Left colon (tissue), 2 donors: ENCODE measurements at regions of chr7 and their contacts with region 1.

Region 1: GRCh38 chr7:151459726-151460473 is 20.0 kb upstream of the CRYGN start:
- DNase-seq: peak; percentile 72 to 91
- ATAC-seq: peak; percentile 92

Region 2: GRCh38 chr7:150962553-150963399 is 497.1 kb before region 1 on chr7:
- intact Hi-C with region 1: no loop called
- DNase-seq: peak in 1 of 2 donors; percentile 65
- ATAC-seq: peak; percentile 89

Region 3: GRCh38 chr7:151519765-151520418 is 60.0 kb after region 1 on chr7 and contains the start of gene RHEB:
- intact Hi-C with region 1: loop called in 1 of 2 experiments (anchors 10 kb)
- DNase-seq: peak; percentile 99
- ATAC-seq: peak; percentile 86
- total RNA-seq, gene RHEB: 53.4 to 69.7 TPM

Region 4: DNA sequence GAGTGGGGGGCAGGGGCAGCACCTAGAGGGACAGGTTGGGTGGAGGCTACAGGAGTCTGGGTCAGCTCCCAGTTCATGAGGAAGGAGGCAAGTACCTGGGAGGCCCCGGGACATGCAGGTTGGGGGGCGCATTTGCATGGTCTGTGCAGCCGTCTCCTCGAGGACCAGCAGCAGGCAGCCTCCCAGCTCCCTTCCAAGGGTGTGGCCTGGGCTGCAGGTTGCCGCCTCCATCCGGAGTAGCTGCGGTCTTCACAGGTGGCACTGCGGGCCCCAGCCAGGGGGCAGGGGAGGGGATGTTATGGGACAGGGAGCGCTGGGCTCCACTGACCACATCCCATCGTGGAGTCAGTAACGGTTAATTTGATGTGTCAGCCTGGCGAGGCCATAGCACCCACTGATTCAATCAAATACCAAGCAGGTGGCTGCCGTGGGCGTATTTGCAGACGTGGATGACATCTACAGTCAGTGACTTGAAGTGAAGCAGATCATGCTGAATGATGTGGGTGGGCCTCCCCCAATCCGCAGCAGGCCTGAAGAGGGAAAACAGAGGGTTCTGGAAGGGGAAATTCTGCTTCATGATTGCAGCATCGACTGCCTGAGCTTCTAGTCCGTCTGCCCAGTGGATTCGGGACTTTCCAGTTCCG is 335.4 kb after region 1 on chr7:
- intact Hi-C with region 1: no loop called
- DNase-seq: no peak
- ATAC-seq: no peak